ENCODE measurements at regions of chr6 and their contacts with region 1.

Region 1: GRCh38 chr6:1596088-1596852 is 13.4 kb upstream of the FOXC1 start:
- DNase-seq: peak; percentile 70
- H3K4me3 Mint-ChIP-seq: no peak overlapping the region
- H3K27ac Mint-ChIP-seq: no peak overlapping the region
- H3K4me1 Mint-ChIP-seq: peaks cover 5% of the 10 kb centered on the region
- H3K27me3 Mint-ChIP-seq: peaks cover 56% of the 10 kb centered on the region

Region 2: DNA sequence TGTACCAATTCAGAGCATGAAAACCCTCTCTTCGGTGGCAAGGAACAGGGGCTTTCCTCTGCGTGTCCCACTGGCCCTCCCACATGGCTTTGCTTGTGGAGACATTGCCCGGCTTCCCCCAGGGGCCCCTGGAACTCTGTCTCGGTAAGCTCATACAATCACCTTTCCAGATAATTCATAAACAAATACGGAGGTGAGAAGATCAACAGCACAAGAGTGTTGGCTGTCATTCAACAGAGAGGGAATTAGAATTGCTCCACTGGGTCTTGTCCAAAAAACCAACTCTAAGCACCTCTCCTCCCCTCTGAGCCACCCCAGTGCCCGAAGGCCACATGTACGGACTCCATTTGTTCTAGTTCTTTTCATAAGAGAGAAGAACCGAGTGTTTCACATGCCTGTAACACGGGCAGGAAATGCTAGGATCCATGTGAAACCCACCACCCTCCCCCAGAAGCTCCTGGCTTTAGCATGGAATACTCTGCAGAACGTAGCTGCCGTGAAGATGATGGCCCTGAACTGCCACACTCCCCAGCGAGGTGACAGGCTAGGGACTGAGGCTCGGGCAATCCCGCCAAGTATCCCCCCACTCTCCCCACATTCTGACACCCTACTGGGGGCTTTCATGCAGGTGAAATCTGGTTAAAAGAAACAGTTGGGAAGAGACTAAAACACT is 11.1 kb before region 1 on chr6:
- CTCF ChIA-PET with region 1: interaction called, 11 read pairs
- intact Hi-C with region 1: no loop called
- DNase-seq: no peak
- H3K4me3 Mint-ChIP-seq: no peak overlapping the region
- H3K27ac Mint-ChIP-seq: no peak overlapping the region
- H3K4me1 Mint-ChIP-seq: no peaks in the 10 kb centered on the region
- H3K27me3 Mint-ChIP-seq: peaks cover 5% of the 10 kb centered on the region

Region 3: GRCh38 chr6:2196079-2196679 is 599.9 kb after region 1 on chr6:
- CTCF ChIA-PET with region 1: interaction called, 4 read pairs
- intact Hi-C with region 1: loop called (anchors 2 kb)
- DNase-seq: peak; percentile 56
- H3K4me3 Mint-ChIP-seq: no peak overlapping the region
- H3K27ac Mint-ChIP-seq: no peak overlapping the region
- H3K4me1 Mint-ChIP-seq: no peaks in the 10 kb centered on the region
- H3K27me3 Mint-ChIP-seq: no peaks in the 10 kb centered on the region

Region 4: DNA sequence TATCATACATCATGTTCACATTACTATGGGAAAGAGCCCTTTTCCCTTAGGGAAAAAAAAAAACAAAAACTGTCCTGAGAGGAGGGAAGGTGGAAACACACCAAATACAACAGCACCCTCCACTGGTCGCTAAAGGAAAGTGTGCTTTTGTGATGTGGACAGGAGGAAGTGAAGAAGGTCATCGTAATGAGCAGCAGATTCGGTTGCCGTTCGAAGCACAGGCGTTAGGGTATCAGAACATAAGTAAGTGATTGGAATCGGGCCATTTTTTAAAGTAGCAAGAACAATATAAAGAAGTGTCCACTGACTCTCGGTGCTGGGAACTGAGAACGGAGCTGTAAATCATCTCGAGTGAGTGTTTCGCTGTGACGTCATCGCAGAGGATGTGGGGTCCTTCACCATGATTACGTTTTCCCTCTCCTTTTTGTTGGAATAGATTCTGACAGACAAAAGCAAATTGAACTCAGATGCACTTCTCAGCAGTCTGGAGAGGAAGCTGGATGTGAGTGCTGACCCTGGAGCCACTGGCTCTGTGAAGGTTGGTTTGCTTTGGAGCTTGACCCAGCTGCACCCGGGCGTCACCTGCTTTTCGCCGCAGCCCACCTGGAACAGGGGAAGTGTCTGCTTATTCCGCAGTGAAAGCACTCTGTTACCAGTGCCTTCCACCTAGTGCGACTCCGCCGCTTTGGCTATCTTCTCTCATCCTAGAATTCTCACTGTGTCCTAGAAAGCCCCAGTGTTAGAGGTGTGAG is 852.7 kb after region 1 on chr6:
- CTCF ChIA-PET with region 1: interaction called, 3 read pairs
- intact Hi-C with region 1: loop called (anchors 2 kb)
- DNase-seq: peak; percentile 48
- H3K4me3 Mint-ChIP-seq: peak overlapping the region; percentile 28
- H3K27ac Mint-ChIP-seq: no peak overlapping the region
- H3K4me1 Mint-ChIP-seq: peaks cover 5% of the 10 kb centered on the region
- H3K27me3 Mint-ChIP-seq: no peaks in the 10 kb centered on the region

Region 5: GRCh38 chr6:2749969-2750600 is 1153.8 kb after region 1 on chr6:
- CTCF ChIA-PET with region 1: interaction called, 15 read pairs
- intact Hi-C with region 1: loop called (anchors 1 kb)
- DNase-seq: peak; percentile 83
- H3K4me3 Mint-ChIP-seq: no peak overlapping the region
- H3K27ac Mint-ChIP-seq: no peak overlapping the region
- H3K4me1 Mint-ChIP-seq: no peaks in the 10 kb centered on the region
- H3K27me3 Mint-ChIP-seq: peaks cover 8% of the 10 kb centered on the region